Psoas muscle (tissue), 8 donors: ENCODE measurements at regions of chr2 and their contacts with region 1.

Region 1: GRCh38 chr2:33599175-33599942 is at the start of gene FAM98A:
- DNase-seq: peak; percentile 100
- ATAC-seq: peak; percentile 96 to 98 (median 97)
- H3K4me3 ChIP-seq: peak within 1 kb of the TSS; percentile 97
- H3K27ac ChIP-seq: peak within 1 kb of the TSS; percentile 97
- H3K4me1 ChIP-seq: peaks cover 20% of the 10 kb centered on the region
- H3K27me3 ChIP-seq: no peaks in the 10 kb centered on the region
- CTCF ChIP-seq: peak; percentile 12
- total RNA-seq, gene FAM98A: 52.2 to 77.9 (median 60.5) TPM

Region 2: DNA sequence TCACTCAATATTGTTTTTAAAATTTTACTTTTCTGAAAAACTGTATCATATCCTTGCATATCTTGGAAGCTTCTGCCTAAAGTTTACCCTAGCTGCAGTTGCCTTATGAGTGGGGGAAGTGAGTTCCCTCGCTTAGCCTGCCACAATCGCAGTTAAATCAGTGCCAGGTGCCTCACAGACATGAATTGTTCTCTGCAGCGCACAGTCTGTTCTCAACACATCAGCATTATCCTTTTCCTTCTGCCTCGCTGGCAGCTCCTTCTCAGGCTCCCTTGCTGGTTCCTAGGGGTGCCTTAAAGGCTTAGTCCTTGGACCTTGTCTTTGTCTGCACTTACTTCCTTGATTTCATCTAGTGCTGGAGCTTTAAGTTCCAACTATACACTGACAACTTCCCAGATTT is 838.7 kb before region 1 on chr2:
- intact Hi-C with region 1: loop called in 1 of 2 experiments (anchors 5 kb)
- DNase-seq: no peak
- ATAC-seq: no peak
- H3K4me3 ChIP-seq: no peak overlapping the region
- H3K27ac ChIP-seq: no peak overlapping the region
- H3K4me1 ChIP-seq: no peaks in the 10 kb centered on the region
- H3K27me3 ChIP-seq: no peaks in the 10 kb centered on the region
- CTCF ChIP-seq: no peak